Transverse colon (tissue), 4 donors: ENCODE measurements at regions of chr6 and their contacts with region 1.

Region 1: DNA sequence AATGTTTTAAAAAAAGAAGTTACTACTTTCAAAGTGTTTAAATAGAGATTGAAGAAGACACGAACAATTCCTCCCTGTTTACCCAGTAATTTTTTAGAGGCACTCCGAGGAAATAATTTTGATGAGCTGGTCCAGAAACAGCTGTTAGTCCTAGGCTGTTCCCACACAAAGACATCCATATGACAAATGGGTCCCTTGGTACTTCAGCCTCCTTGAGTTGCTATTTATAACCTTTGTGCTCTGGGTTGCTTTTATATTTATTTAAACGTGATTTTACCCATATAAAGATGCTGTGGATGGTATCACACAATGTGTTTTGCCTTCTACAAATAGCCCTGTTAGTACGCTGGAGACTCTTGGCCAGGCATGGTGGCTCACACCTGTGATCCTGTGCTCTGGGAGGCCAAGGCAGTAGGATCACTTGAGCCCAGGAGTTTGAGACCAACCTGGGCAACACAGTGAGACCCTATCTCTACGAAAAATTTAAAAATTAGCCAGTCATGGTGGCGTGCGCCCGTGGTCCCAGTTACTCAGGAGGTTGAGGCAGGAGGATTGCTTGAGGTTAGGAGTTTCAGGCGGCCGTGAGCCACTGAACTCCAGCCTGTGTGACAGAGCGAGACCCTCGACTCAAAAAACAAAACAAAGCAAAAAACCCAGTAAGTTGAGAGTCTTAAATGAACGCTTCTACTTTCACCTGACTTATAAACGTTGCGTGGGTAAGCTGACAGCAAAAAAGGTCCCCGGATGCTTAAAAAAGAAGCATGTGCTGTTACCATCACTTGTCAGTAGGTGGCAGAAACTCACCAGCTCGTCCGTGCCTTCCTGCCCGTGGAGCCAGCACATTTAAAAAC is 56.9 kb upstream of the ARMH2 start:
- DNase-seq: peak; percentile 57
- H3K4me3 ChIP-seq: no peak overlapping the region
- H3K27ac ChIP-seq: peak overlapping the region in 2 of 4 donors; percentile 10 to 27
- H3K4me1 ChIP-seq: peaks cover 0 to 25% (median 10%) of the 10 kb centered on the region in 4 donors
- H3K27me3 ChIP-seq: no peaks in the 10 kb centered on the region
- CTCF ChIP-seq: peak; percentile 82 to 88 (median 86)
- EP300 ChIP-seq: no peak
- POLR2A ChIP-seq: no peak

Region 2: DNA sequence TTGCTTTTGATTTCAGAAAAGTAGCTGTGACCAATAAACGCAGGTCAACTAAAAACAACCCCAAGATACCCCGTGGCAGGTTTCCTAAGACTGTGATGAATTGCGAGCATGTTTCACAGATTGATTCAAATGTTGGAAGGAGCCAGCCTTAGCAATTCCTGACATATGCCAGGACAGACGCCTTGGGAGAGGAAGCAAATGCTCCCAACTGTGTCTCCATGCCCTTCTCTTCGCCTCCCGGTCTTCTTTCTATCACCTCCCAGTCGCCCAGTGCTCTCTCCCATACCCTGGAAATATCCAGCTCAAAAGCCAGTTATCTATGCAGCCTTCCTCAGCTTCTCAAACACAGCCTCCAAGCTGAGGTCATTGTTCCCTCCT is 241.6 kb before region 1 on chr6:
- in situ Hi-C with region 1: no loop called
- intact Hi-C with region 1: no loop called
- DNase-seq: no peak
- H3K4me3 ChIP-seq: no peak overlapping the region
- H3K27ac ChIP-seq: no peak overlapping the region
- H3K4me1 ChIP-seq: no peaks in the 10 kb centered on the region
- H3K27me3 ChIP-seq: no peaks in the 10 kb centered on the region
- CTCF ChIP-seq: no peak
- EP300 ChIP-seq: no peak
- POLR2A ChIP-seq: no peak

Region 3: DNA sequence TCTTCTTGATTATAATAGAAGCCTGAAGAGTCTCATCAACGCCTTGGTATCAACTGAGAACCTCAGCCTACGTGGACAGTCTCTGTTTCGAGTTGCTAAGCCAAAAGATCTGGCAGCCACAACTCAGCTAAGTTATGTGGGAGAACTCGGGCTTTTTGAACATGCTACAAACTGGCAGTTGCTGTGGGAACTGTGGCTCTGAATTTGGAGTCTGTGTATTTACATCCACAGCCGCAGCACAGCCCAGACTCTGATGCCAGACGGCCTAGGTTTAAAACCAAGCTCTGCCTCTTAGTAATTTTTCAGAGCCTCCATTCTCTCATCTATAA is 44.3 kb after region 1 on chr6:
- in situ Hi-C with region 1: no loop called
- intact Hi-C with region 1: no loop called
- DNase-seq: no peak
- H3K4me3 ChIP-seq: no peak overlapping the region
- H3K27ac ChIP-seq: peak overlapping the region in 1 of 4 donors; percentile 21
- H3K4me1 ChIP-seq: no peaks in the 10 kb centered on the region
- H3K27me3 ChIP-seq: no peaks in the 10 kb centered on the region
- CTCF ChIP-seq: no peak
- EP300 ChIP-seq: no peak
- POLR2A ChIP-seq: no peak

Region 4: GRCh38 chr6:24974182-24975171 is 118.9 kb after region 1 on chr6:
- in situ Hi-C with region 1: no loop called
- intact Hi-C with region 1: no loop called
- DNase-seq: no peak
- H3K4me3 ChIP-seq: no peak overlapping the region
- H3K27ac ChIP-seq: no peak overlapping the region
- H3K4me1 ChIP-seq: no peaks in the 10 kb centered on the region
- H3K27me3 ChIP-seq: no peaks in the 10 kb centered on the region
- CTCF ChIP-seq: no peak
- EP300 ChIP-seq: no peak
- POLR2A ChIP-seq: no peak

Region 5: DNA sequence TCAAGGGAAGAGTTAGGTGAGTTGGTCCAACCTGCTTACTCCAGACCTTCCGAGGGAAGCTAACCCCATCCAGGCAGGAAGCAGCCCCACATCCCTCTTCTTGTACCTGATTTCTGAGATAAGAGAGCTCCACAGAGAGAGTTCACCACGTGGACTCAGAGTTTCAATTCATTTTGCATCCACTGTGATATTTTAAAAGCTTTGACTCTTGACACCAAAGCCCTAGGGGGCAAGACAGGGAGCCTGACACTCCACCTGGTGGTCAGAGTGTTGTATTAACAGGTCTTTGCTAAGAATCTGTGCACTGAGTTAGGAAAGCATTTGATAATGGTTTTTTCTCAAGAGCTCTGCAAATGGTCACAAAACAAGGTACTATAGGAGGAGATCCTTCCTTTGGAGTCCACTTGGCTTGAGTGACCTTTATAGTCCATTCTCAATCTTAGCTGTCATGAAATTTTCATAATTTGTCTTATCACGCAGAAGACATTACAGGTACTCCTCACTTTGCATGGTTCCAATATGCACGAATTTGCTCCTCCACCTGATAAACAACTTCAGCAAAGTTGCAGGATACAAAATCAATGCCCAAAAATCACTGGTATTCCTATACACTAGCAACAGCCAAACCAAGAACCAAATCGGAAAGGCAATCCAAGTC is 136.3 kb after region 1 on chr6:
- in situ Hi-C with region 1: loop called in 1 of 4 experiments (anchors 10 kb)
- intact Hi-C with region 1: no loop called
- DNase-seq: peak; percentile 50
- H3K4me3 ChIP-seq: no peak overlapping the region
- H3K27ac ChIP-seq: no peak overlapping the region
- H3K4me1 ChIP-seq: no peaks in the 10 kb centered on the region
- H3K27me3 ChIP-seq: no peaks in the 10 kb centered on the region
- CTCF ChIP-seq: peak; percentile 64 to 75 (median 71)
- EP300 ChIP-seq: no peak
- POLR2A ChIP-seq: no peak

Region 6: GRCh38 chr6:25017932-25018567 is 162.4 kb after region 1 on chr6:
- in situ Hi-C with region 1: loop called in 2 of 4 experiments (anchors 10 kb)
- intact Hi-C with region 1: no loop called
- DNase-seq: peak; percentile 74
- H3K4me3 ChIP-seq: no peak overlapping the region
- H3K27ac ChIP-seq: no peak overlapping the region
- H3K4me1 ChIP-seq: peaks cover 0 to 6% (median 3%) of the 10 kb centered on the region in 4 donors
- H3K27me3 ChIP-seq: no peaks in the 10 kb centered on the region
- CTCF ChIP-seq: peak; percentile 30 to 63 (median 50)
- EP300 ChIP-seq: no peak
- POLR2A ChIP-seq: no peak

Region 7: GRCh38 chr6:25061289-25061936 is 205.8 kb after region 1 on chr6:
- in situ Hi-C with region 1: loop called in 2 of 4 experiments (anchors 5 to 10 kb)
- intact Hi-C with region 1: no loop called
- DNase-seq: no peak
- H3K4me3 ChIP-seq: no peak overlapping the region
- H3K27ac ChIP-seq: no peak overlapping the region
- H3K4me1 ChIP-seq: no peaks in the 10 kb centered on the region
- H3K27me3 ChIP-seq: no peaks in the 10 kb centered on the region
- CTCF ChIP-seq: no peak
- EP300 ChIP-seq: no peak
- POLR2A ChIP-seq: no peak

Region 8: GRCh38 chr6:25070547-25071366 is 215.1 kb after region 1 on chr6:
- in situ Hi-C with region 1: loop called in 3 of 4 experiments (anchors 5 to 10 kb)
- intact Hi-C with region 1: loop called (anchors 5 kb)
- DNase-seq: peak; percentile 84
- H3K4me3 ChIP-seq: no peak overlapping the region
- H3K27ac ChIP-seq: no peak overlapping the region
- H3K4me1 ChIP-seq: peaks cover 0 to 4% (median 0%) of the 10 kb centered on the region in 4 donors
- H3K27me3 ChIP-seq: no peaks in the 10 kb centered on the region
- CTCF ChIP-seq: peak; percentile 89 to 95 (median 92)
- EP300 ChIP-seq: no peak
- POLR2A ChIP-seq: no peak

Region 9: GRCh38 chr6:25992413-25993037 is 1136.9 kb after region 1 on chr6:
- in situ Hi-C with region 1: no loop called
- intact Hi-C with region 1: loop called (anchors 10 kb)
- DNase-seq: peak; percentile 97
- H3K4me3 ChIP-seq: peak overlapping the region; percentile 26 to 61 (median 51)
- H3K27ac ChIP-seq: peak overlapping the region; percentile 86 to 90 (median 88)
- H3K4me1 ChIP-seq: peaks cover 5 to 24% (median 13%) of the 10 kb centered on the region in 4 donors
- H3K27me3 ChIP-seq: no peaks in the 10 kb centered on the region
- CTCF ChIP-seq: peak; percentile 84 to 99 (median 98)
- EP300 ChIP-seq: no peak
- POLR2A ChIP-seq: peak; percentile 89